Activated CD4-positive, alpha-beta T cell treated with anti-CD3 and anti-CD28 coated beads, Interleukin-2, amount 10 ng/mL, durations not matched to agents 24 days and 14 days (primary cell): ENCODE measurements at regions of chr3 and their contacts with region 1.

Region 1: DNA sequence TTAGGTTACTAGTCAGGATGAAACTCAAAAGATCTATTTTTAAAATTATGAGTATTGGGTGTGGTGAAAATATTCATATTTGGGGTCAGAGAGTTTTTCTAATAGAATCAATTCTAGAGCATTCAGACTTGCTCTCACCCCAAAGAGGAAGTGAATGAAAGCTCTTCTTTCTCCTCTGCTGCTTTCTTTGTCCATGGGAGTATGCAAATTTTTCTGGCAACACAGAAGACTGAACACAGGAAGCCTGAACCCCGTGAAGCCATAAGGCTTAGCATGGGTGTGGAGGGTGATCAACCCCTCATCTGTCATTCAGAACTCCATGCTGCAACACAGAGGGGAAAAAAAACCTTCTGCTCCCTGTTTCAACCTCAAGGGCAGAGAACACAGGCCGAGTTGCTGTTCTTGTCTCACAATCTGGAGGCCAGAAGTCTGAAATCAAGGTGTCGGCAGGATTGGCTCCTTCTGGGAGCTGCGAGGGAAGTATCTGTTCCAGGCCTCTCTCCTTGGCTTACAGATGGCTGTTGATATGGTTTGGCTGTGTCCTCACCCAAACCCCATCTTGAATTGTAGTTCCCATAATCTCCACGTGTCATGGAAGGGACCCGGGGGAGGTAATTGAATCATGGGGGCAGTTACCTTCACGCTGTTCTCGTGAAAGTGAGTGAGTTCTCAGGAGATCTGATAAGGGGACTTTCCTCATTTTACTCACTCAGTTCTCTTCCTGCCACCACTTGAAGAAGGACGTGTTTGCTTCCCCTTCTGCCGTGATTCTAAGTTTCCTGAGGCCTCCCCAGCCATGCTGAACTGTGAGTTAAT is 33.7 kb upstream of the CD47 start:
- DNase-seq: peak; percentile 91
- H3K4me3 Mint-ChIP-seq: peak overlapping the region; percentile 96
- H3K27ac Mint-ChIP-seq: peak overlapping the region; percentile 99
- H3K4me1 Mint-ChIP-seq: peaks cover 53% of the 10 kb centered on the region
- H3K27me3 Mint-ChIP-seq: no peaks in the 10 kb centered on the region

Region 2: DNA sequence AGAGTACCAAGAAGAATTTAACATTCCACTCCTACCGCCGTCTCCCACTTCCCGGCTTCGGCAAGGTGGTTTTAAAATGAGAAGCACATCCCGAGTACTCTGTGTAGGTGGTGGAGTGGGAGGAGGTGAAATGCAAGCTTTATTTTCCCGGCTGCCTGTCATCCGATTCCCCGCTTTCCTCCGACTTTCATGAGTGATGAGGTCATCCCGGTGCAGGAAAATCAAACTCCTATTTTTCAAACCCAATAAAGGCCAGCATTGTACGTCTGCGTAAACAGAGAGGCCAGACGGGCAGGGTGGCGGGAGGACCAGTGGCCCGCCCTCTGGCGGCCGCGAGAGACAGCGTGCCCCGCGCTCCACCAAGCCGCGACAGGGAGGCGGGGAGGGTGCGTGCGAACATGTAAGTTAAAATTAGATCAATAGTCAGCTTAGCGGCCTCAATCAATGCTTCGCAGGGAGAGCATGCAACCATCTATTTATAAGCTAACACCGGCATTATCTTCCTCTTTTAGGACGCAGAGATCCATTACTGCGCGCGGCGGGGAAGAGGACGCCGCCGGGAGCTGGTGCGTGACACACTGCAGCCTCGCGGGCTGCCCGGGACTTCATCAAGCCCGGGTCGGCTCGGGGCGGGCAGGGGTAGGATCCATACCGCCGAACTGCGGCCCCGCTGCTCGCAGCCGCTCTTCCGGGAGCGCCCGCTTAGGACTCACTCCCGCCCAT is 197.0 kb before region 1 on chr3:
- intact Hi-C with region 1: loop called (anchors 5 kb)
- DNase-seq: peak; percentile 90
- H3K4me3 Mint-ChIP-seq: peak overlapping the region; percentile 87
- H3K27ac Mint-ChIP-seq: peak overlapping the region; percentile 59
- H3K4me1 Mint-ChIP-seq: peaks cover 13% of the 10 kb centered on the region
- H3K27me3 Mint-ChIP-seq: peaks cover 19% of the 10 kb centered on the region

Region 3: DNA sequence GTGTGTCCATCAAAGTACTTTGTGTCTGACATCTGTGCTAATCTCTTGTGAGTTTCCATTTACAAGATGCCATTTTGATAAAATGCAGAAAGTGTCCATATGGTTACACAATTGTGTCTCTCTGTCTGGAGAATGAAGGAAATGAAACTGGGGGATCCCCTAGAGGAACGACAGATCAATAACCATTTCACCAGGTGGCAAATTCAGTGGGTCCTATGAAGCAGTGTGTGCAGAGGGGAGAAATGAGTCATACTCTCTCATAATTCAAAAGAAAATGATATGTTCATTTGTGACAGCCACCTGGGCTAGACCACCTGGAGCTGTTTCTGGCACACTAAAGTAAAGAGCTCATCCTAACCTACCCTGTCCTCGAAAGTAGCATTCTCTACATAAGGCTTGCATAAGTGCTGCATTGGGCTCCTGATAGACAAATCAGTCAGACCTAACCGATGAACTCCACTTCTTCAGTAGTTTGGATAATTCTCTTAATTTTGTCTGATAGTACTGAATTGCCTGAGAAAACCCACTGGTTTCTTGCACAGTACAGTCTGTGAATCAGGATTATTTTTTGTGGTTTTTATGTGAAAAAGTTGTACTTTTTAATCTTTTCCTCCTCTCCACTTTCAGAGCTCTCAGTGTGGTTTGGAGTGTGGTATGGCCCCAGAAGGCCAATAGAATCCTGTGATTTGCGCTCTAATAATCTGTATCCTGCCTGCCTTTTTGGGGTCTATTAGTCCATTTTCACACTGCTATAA is 23.5 kb before region 1 on chr3:
- intact Hi-C with region 1: loop called (anchors 2 kb)
- DNase-seq: peak; percentile 80
- H3K4me3 Mint-ChIP-seq: peak overlapping the region; percentile 49
- H3K27ac Mint-ChIP-seq: peak overlapping the region; percentile 81
- H3K4me1 Mint-ChIP-seq: peaks cover 40% of the 10 kb centered on the region
- H3K27me3 Mint-ChIP-seq: peaks cover 19% of the 10 kb centered on the region

Region 4: DNA sequence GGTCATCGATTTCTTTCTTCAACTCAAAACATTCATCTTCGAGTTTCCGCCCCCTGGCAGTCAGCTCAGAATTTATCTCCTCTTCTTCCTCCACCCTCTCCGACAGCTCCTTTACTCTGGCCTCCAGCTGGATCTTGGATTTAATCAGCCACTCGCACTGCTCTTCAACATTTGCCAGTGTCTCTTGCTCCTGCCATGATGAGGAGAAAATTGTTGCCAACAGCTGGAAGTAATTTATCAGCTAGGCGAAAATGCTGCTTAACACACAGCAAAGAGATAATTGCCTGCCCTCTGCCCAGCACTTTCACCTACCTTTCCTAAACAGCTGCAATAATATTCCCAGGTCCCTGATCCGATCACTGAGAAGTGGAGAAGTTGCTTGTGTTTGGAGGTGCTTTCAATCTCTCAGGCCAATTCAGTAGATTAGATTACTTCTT is 316.5 kb after region 1 on chr3:
- intact Hi-C with region 1: no loop called
- DNase-seq: no peak
- H3K4me3 Mint-ChIP-seq: no peak overlapping the region
- H3K27ac Mint-ChIP-seq: no peak overlapping the region
- H3K4me1 Mint-ChIP-seq: no peaks in the 10 kb centered on the region
- H3K27me3 Mint-ChIP-seq: peaks cover 6% of the 10 kb centered on the region